Right ventricle myocardium superior (tissue), 1 donor: ENCODE measurements at regions of chr10 and their contacts with region 1.

Region 1: GRCh38 chr10:25113191-25114035 is 61.4 kb upstream of the GPR158 start:
- DNase-seq: peak; percentile 83
- ATAC-seq: peak; percentile 91

Region 2: GRCh38 chr10:25198151-25198550 is 84.7 kb after region 1 on chr10:
- intact Hi-C with region 1: no loop called
- DNase-seq: no peak
- ATAC-seq: no peak

Region 3: DNA sequence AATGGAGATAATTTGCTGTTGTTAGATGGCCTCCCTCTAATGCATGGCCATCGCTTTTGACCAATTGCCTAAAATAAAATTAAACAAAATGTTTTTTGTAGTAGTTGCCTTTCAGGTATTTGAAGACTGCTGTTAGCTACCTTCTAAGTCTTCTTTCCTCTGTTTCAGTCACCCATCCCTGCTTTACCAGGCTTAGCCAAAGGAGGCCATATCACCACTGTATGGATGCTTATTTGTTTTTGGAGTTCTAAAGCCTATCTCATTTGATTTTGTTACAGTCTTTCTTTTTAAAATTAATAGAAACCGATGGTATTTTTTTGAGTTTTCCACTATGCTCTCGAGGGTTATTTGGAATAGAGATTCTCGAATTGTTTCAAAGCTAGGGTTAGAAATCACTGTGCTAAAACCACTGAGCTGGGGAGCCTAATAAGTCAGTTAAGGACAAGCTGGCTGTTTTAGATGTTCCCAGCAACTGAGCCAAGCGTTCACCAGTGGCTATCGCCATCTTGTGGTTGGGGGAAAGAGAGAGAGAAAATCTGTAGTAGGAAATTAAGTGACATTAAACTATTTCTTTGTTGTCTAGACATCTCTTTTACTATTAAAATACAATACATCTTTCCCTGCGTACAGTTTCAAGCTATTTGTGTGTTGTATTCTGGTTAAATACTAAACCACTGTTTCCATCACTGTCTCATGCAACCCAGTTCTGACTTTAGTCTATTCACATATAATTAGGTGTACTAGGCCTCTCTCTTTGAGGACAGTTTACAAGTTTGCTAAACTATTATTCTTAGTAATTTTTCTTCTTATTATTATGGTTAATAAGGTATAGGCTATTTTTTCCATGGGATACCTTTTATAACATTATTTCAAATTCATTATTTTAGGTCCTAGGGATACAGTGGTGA is 113.6 kb after region 1 on chr10:
- intact Hi-C with region 1: loop called (anchors 10 kb)
- DNase-seq: no peak
- ATAC-seq: peak; percentile 72

Region 4: DNA sequence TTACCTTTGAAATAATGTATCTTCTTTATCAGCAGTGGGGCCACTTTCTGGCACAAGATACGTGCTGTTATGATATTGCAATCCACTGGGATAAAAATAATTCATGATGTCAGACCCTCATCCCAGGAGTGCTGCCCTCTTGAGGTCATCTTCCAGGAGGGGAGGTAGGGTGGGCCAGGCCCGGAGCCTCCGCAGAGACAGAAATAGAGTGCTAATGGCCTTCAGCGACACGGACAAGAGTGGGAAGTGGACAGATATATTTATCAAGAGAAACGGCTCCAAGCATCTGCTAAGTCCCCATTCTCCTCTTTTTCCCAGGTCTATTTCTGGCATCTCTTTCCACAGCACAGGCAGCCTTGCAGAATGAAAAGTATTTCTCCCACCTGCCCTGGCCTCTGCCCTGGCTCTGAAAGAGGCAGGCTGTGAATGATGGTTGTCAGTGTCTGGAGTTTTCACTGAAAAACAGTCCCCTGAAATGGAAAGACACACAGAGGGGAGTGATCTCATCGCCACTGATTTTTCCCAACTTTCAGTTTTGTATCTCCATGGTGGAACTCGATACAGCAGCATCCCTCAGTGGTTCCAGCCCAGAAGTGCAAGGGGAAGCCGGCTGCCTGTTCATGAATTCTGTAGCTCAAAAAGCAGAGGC is 568.9 kb after region 1 on chr10:
- intact Hi-C with region 1: loop called (anchors 10 kb)
- DNase-seq: no peak
- ATAC-seq: peak; percentile 85